ENCODE measurements at regions of chr19 and their contacts with region 1.

Region 1: DNA sequence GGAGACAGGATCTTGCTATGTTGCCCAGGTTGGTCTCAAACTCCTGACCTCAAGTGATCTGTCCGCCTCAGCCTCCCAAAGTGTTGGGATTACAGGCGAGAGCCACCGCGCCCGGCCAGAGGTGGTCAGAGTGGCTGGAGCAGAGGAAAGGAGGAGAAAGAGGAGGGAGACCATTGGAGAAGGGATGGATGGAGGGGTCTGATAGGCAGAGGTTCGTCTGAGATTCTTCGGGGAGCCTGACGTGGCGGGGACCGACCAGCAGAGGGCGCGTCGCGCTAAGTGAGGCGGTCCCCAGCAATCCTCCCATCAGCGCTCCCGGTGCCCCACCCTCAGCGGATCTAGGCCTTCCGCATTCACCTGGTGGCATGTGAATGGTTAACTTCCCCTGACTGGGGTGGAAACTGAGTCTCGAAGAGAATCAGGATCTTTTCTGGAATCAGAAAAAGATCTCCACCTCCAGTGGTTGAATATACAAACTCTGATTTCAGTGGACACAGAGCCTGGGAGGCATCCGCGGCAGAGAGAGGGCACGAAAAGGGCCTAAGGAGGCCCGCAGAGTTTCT is 8.8 kb downstream of the GTPBP3 start:
- DNase-seq: peak in 2 of 3 donors; percentile 74 to 78
- ATAC-seq: peak; percentile 90 to 95 (median 92)
- H3K4me3 ChIP-seq: no peak overlapping the region
- H3K27ac ChIP-seq: no peak overlapping the region
- H3K4me1 ChIP-seq: peaks cover 0 to 3% (median 1%) of the 10 kb centered on the region in 4 donors
- H3K27me3 ChIP-seq: no peaks in the 10 kb centered on the region
- CTCF ChIP-seq: peak; percentile 91 to 97 (median 94)
- POLR2A ChIP-seq: no peak

Region 2: DNA sequence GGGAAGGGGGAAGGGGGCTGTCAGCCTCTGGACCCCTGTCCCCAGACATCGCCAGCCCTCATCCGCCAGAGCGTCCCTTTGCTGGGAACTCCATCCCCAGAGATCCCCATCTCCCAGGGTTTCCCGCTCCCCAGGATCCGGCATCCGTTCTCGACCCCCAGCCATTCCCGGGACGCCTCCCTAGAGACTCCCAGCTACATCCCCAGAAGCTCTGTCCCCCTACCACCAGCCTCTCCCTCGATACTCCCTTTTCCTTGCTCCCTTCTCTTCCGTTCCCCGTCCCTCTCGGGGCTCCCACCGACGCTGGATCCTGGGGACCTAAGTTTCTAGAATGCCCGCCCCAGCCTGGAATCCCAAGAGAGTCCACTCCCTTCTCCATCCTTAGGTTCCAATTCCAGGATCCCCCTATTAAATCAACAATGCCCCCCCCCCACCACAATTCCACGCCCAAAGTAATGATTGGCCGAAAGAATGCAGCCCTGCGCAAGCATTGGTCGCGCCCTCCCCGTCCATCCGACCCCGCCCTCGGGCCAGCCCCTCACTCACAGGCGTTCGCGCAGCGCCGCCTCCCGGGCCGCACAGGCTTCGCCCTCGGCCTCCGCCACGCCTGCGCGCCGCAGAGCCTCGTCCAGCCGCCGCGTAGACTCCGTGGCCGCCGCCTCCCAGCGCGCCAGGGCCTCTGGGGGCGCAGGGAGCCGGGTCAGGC is 44.6 kb after region 1 on chr19:
- intact Hi-C with region 1: loop called in 1 of 2 experiments (anchors 5 kb)
- DNase-seq: peak; percentile 84 to 86 (median 84)
- ATAC-seq: peak; percentile 94 to 97 (median 96)
- H3K4me3 ChIP-seq: peak overlapping the region; percentile 13 to 28 (median 24)
- H3K27ac ChIP-seq: no peak overlapping the region
- H3K4me1 ChIP-seq: peaks cover 0 to 5% (median 1%) of the 10 kb centered on the region in 4 donors
- H3K27me3 ChIP-seq: no peaks in the 10 kb centered on the region
- CTCF ChIP-seq: peak; percentile 51 to 71 (median 62)
- POLR2A ChIP-seq: no peak

Region 3: DNA sequence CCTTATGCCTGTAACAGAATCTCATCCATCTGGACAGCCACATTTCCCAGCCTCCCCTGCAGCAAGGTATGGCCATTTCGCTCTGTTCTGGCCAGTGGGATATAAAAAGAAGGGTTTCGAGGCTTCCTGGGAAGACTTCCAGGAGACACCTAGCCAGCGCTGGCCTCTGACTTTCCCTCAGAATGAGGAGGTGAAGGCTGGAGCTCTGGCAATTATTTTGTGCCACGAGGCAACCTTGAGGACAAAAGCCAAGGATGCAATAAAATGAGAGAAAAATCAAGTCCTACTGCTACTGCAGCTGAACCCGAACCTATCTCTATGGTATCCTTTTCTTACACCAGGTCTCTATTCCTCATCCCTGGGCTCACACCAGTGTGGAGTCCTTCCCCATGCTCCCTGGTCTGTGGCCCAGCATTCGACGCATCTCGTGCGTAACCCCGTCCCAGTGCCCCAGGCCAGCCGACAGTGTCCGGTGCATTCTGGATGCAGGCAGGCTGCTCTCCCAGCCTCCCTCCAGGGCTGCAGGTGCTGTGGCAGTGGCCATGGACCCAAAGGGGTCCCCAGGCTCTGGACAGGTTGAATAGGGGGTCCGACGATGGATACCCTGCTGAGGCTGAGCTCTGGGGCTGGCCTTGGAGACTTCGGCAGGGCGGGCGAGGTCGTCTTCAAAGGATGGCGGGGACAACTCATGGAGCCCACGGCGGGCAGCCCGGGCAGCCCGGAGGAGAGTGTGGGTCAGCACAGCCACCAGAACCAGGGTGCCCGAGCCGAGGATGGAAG is 90.1 kb after region 1 on chr19:
- intact Hi-C with region 1: no loop called
- DNase-seq: no peak
- ATAC-seq: peak in 1 of 4 donors; percentile 18
- H3K4me3 ChIP-seq: no peak overlapping the region
- H3K27ac ChIP-seq: no peak overlapping the region
- H3K4me1 ChIP-seq: no peaks in the 10 kb centered on the region
- H3K27me3 ChIP-seq: no peaks in the 10 kb centered on the region
- CTCF ChIP-seq: no peak
- POLR2A ChIP-seq: no peak

Region 4: GRCh38 chr19:17450264-17451075 is 104.3 kb after region 1 on chr19:
- intact Hi-C with region 1: loop called in 1 of 2 experiments (anchors 10 kb)
- DNase-seq: no peak
- ATAC-seq: no peak
- H3K4me3 ChIP-seq: no peak overlapping the region
- H3K27ac ChIP-seq: no peak overlapping the region
- H3K4me1 ChIP-seq: peaks cover 0 to 6% (median 0%) of the 10 kb centered on the region in 4 donors
- H3K27me3 ChIP-seq: peaks cover 0 to 3% of the 10 kb centered on the region in 2 donors
- CTCF ChIP-seq: no peak
- POLR2A ChIP-seq: no peak

Measured in right lobe of liver (tissue), 6 donors.